Activated CD8-positive, alpha-beta T cell treated with anti-CD3 and anti-CD28 coated beads, Interleukin-2, amount 10 ng/mL, durations not matched to agents 7 days and 5 days (primary cell): ENCODE measurements at regions of chr17 and their contacts with region 1.

Region 1: DNA sequence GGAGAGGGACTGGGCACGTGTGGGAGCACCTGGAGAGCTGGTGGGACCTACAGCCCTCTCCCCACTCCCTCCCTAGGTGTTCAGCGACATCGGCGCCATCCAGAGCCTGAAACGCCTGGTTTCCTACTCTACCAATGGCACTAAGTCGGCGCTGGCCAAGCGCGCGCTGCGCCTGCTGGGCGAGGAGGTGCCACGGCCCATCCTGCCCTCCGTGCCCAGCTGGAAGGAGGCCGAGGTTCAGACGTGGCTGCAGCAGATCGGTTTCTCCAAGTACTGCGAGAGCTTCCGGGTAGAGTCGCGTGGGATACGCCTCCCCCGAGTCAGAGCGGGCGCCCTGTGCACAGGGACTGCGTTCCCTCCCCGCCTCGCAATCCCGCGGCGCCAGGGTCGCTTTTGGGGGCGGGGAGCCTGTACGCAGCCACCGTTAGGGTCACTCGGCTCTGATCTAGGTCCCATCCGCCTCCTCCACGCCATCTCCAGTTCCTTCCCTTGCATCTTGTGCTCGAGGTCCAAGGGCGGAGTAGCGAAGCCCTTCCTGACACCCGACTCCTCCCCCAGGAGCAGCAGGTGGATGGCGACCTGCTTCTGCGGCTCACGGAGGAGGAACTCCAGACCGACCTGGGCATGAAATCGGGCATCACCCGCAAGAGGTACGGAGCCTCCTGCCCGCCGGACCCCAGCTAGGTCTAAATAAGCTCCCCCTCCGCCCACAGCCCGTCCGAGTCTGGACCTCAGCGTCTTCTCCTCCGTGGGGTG is 13.0 kb downstream of the SARM1 start:
- DNase-seq: peak; percentile 84
- ATAC-seq: peak; percentile 94
- H3K4me3 Mint-ChIP-seq: peak overlapping the region; percentile 83
- H3K27ac Mint-ChIP-seq: peak overlapping the region; percentile 82
- H3K4me1 Mint-ChIP-seq: peaks cover 23% of the 10 kb centered on the region
- H3K27me3 Mint-ChIP-seq: peaks cover 6% of the 10 kb centered on the region

Region 2: DNA sequence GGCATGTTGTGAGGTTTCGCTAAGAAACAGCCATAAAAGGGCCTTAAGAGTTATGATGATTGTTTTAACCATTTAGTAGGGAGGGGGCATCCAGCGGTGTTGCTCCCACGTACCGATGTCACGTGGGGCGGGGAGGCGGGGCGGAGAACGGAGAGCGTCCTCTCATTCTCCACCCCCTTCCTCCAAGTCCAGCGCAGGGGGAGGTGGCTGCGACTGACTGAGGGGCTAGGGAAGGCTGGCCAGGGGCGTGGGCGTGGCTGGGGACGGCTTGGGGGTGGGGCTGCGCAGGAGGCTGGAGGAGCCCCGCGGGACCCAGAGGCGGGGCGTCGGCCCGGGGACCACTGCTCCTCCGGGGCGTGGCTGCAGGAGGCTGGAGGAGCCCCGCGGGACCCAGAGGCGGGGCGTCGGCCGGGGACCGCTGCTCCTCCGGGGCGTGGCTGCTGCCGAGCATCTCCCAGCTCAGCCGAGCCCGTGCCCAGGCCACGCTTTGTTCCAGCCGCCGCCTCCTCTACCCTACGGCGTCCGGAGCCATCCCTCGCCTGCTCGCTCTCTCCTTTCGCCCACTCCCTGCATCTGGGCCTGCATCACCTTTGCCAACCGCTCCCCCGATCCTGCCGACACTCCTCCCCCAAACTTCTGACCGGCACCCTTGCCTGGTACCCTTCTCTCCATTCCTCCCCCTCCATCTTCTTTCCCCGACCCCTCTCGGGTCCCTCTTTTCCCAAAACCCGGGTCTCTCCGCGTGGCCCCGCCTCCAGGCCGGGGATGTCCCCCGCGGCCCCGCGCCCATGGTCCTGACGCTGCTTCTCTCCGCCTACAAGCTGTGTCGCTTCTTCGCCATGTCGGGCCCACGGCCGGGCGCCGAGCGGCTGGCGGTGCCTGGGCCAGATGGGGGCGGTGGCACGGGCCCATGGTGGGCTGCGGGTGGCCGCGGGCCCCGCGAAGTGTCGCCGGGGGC is 12.9 kb before region 1 on chr17 and contains the start of gene SARM1:
- CTCF ChIA-PET with region 1: interaction called, 4 read pairs
- POLR2A ChIA-PET with region 1: interaction called, 20 read pairs
- DNase-seq: peak; percentile 93
- ATAC-seq: peak; percentile 94
- H3K4me3 Mint-ChIP-seq: peak within 1 kb of the TSS; percentile 87
- H3K27ac Mint-ChIP-seq: peak within 1 kb of the TSS; percentile 85
- H3K4me1 Mint-ChIP-seq: peaks cover 21% of the 10 kb centered on the region
- H3K27me3 Mint-ChIP-seq: no peaks in the 10 kb centered on the region
- total RNA-seq, gene SARM1: 16.2 to 20.0 TPM

Region 3: GRCh38 chr17:28446728-28447395 is 62.4 kb after region 1 on chr17:
- CTCF ChIA-PET with region 1: no interaction called
- POLR2A ChIA-PET with region 1: no interaction called
- DNase-seq: no peak
- ATAC-seq: no peak
- H3K4me3 Mint-ChIP-seq: no peak overlapping the region
- H3K27ac Mint-ChIP-seq: no peak overlapping the region
- H3K4me1 Mint-ChIP-seq: no peaks in the 10 kb centered on the region
- H3K27me3 Mint-ChIP-seq: peaks cover 28% of the 10 kb centered on the region